ENCODE measurements at regions of chr15 and their contacts with region 1.

Region 1: DNA sequence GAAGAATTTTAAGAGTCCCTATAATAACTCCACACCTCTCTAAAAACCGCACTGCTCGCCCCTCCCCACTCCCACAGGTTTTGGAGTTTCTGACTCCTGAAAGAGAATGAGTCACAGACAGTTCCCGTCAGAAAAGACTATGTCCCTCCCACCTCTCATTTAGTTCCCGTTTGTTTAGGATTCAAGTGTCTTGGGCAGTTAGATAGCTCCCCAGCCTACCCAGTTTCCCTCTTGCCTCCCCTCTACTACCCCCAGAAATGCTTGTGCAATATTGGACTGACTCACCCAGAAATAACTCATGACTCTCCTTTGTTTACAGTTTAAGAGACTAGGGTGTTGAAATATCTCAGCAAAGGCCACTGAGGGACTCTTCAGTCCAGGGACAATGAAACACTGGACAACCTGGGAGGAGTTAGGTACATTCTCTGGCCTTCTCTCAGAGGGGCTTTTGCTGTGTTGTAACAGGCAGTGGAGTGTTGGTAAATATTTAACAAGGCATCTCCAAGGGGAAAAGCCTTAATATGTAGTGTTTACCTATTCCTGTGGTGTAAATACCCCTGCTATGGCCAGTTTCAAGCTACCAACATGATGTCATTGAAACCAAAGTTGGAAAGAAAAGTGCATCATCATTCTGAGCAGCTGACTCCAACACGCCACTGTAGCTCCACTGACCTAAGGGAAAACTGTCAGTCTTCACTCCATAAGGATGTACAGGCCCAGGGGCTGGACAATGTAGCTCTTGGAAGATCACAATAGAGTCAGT is 96.1 kb upstream of the CHD2 start:
- DNase-seq: peak; percentile 100
- ATAC-seq: peak; percentile 88
- H3K4me3 ChIP-seq: no peak overlapping the region
- H3K27ac ChIP-seq: peak overlapping the region; percentile 72; the same call in 1 of the 2 replicates
- H3K4me1 ChIP-seq: peaks cover 18% of the 10 kb centered on the region
- H3K27me3 ChIP-seq: no peaks in the 10 kb centered on the region
- CTCF ChIP-seq: no peak
- POLR2A ChIP-seq: peak; percentile 53; the same call in 1 of the 2 replicates
- RAD21 ChIP-seq: peak; percentile 24

Region 2: DNA sequence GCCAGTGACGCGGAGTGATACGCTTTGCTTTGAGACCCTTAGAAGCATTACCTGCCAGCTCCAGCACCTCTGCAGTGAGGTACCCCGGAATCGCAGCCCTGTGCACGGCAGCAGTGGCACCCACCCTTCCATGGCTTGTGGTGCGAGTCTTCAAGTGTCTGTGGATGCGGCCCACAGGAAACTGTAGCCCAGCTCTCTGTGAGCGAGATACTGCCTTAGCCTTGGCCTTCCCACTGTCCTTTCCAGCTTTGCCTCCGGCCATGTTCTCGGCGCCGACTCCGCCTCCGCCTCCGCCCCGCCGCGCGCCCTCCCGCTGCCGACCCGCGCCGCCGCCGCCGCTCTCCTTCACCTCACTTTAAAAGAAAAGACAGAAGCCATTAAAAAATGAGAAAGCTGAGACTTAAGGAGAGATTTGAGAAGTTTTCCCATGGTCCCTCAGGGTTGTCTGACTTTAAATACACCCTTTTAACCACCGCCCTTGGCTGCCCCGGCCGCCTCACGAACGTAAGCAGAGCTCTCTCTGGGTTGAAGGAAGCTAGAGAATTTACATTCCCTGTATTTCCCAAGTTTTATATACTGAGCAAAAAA is 70.0 kb before region 1 on chr15:
- CTCF ChIA-PET with region 1: no interaction called
- POLR2A ChIA-PET with region 1: no interaction called
- dilution Hi-C with region 1: no loop called
- in situ Hi-C with region 1: no loop called
- intact Hi-C with region 1: no loop called
- DNase-seq: peak; percentile 11
- ATAC-seq: peak; percentile 89
- H3K4me3 ChIP-seq: peak overlapping the region; percentile 45
- H3K27ac ChIP-seq: 0 out of 2 replicates have a peak overlapping the region, but pooled peaks have one; percentile 55
- H3K4me1 ChIP-seq: peaks cover 2% of the 10 kb centered on the region; the same call in 1 of the 2 replicates
- H3K27me3 ChIP-seq: no peaks in the 10 kb centered on the region
- CTCF ChIP-seq: no peak
- POLR2A ChIP-seq: no peak
- RAD21 ChIP-seq: no peak

Region 3: GRCh38 chr15:92881802-92882696 is 78.0 kb after region 1 on chr15:
- CTCF ChIA-PET with region 1: interaction called, 3 read pairs
- POLR2A ChIA-PET with region 1: interaction called, 27 read pairs
- dilution Hi-C with region 1: no loop called
- in situ Hi-C with region 1: no loop called
- intact Hi-C with region 1: loop called (anchors 1 kb)
- DNase-seq: peak; percentile 100
- ATAC-seq: peak; percentile 94
- H3K4me3 ChIP-seq: peak overlapping the region; percentile 99
- H3K27ac ChIP-seq: peak overlapping the region; percentile 82
- H3K4me1 ChIP-seq: peaks cover 7% of the 10 kb centered on the region
- H3K27me3 ChIP-seq: no peaks in the 10 kb centered on the region
- CTCF ChIP-seq: no peak
- POLR2A ChIP-seq: 0 out of 2 replicates have a peak, but pooled peaks have one; percentile 44
- RAD21 ChIP-seq: no peak

Region 4: DNA sequence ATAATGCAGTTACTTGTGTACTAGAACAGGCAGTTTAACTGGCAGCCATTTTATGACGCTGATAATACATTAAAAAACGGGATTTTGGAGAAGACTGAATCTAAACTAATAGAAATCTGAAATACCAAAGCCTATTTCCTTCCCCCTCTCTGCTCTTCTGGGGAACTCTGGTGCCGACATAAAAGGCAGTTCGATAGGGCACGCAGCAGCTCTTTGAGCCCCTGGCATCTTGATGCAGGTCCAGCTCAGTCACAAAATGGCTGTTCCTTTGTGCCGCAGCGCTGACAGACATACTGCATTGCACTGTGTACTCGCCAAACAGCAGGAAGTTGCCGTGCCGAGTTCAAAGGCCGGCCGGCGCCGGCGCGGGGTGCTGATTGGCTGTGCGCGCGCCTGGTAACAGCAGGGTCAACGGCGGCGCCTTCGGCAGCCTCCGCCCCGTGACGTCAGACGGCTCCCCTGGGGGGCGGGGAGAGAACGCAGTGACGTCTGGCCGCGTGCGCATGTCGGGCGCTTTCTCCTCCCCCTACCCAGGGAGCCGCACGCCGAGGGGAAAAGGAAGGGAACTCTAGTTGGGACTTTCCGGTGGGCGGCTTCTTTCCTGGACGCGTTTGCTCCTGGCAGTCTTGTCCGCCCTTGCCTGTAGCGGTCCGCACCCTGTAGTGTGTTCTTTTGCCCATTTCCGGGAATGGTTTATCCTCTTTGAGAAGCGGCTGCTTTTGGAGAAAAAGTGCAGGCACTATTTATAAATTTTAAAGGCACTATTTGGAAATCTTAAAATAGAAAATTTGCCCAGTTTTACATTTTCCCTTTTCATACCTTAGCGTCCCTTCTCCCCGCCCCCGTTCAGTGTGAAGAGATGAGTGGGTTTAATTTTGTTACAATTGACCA is 100.2 kb after region 1 on chr15:
- CTCF ChIA-PET with region 1: interaction called, 7 read pairs
- POLR2A ChIA-PET with region 1: interaction called, 12 read pairs
- dilution Hi-C with region 1: no loop called
- in situ Hi-C with region 1: no loop called
- intact Hi-C with region 1: loop called (anchors 1 kb)
- DNase-seq: peak; percentile 98
- ATAC-seq: peak; percentile 85
- H3K4me3 ChIP-seq: peak overlapping the region; percentile 54
- H3K27ac ChIP-seq: peak overlapping the region; percentile 98
- H3K4me1 ChIP-seq: peaks cover 11% of the 10 kb centered on the region
- H3K27me3 ChIP-seq: no peaks in the 10 kb centered on the region
- CTCF ChIP-seq: no peak
- POLR2A ChIP-seq: peak; percentile 98
- RAD21 ChIP-seq: no peak

Region 5: DNA sequence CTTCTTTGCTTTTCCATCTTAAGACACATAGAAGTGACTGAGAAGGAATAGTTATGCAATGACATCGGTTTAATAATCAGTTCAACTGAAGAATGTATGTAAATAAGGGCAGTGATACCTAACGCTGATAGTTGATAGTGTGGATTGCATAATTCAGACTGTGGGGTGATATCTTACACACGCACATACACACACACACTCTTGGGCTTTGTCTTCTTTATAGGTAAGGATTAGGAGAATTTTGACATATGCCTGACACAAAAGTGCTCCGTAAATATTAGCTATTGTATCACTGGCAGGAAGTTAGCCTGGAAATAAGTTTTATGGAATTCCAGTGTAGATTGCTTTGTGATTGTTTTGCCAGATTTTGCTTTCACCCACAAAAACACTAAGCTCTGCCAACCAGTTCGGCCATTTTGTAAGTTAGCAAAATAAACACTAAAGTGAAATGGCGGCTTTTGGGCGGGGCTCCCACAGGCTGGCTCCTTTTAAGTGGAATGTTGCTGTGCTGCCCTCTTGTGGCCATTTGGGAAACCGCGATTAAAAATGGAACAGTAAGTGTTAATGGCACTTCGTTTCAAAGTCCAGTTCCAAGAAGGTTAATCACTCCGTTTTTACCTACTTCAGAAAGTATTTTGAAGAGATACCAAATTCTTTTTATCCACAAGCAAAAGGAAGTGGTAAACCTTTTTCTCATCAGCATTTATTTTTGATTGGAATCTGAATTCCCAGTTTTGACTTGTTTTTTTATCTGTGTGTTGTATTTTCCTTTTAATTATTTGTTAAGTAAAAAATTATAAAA is 113.8 kb after region 1 on chr15:
- CTCF ChIA-PET with region 1: interaction called, 6 read pairs
- POLR2A ChIA-PET with region 1: interaction called, 7 read pairs
- dilution Hi-C with region 1: no loop called
- in situ Hi-C with region 1: loop called (anchors 5 kb)
- intact Hi-C with region 1: loop called (anchors 1 kb)
- DNase-seq: peak; percentile 93
- ATAC-seq: peak; percentile 61
- H3K4me3 ChIP-seq: no peak overlapping the region
- H3K27ac ChIP-seq: peak overlapping the region; percentile 88; the same call in 1 of the 2 replicates
- H3K4me1 ChIP-seq: peaks cover 31% of the 10 kb centered on the region
- H3K27me3 ChIP-seq: no peaks in the 10 kb centered on the region
- CTCF ChIP-seq: peak; percentile 94
- POLR2A ChIP-seq: peak; percentile 33; the same call in 1 of the 2 replicates
- RAD21 ChIP-seq: peak; percentile 85

Region 6: DNA sequence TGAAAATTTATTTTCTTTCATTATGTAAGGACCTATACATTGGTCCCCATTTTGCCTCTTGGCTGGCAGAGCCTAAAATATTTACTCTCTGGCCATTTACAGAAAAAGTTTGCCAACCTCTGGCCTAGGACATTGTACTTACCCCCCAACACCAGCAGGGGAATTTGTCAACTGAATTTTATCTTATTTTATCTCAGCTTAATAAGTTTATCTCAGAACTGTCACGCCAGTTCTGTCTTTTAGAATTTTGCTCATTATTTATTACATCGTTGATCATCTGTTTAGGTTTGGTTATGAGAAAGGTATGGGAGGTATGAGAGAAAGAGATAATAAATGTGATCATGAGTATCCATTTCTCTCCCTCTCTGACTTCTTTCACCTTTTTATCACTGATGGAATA is 134.4 kb after region 1 on chr15:
- CTCF ChIA-PET with region 1: no interaction called
- POLR2A ChIA-PET with region 1: interaction called, 22 read pairs
- dilution Hi-C with region 1: loop called (anchors 25 kb)
- in situ Hi-C with region 1: no loop called
- intact Hi-C with region 1: no loop called
- DNase-seq: no peak
- ATAC-seq: no peak
- H3K4me3 ChIP-seq: no peak overlapping the region
- H3K27ac ChIP-seq: no peak overlapping the region
- H3K4me1 ChIP-seq: no peaks in the 10 kb centered on the region; the same call in 1 of the 2 replicates
- H3K27me3 ChIP-seq: no peaks in the 10 kb centered on the region
- CTCF ChIP-seq: 0 out of 2 replicates have a peak, but pooled peaks have one; percentile 8
- POLR2A ChIP-seq: no peak
- RAD21 ChIP-seq: no peak

Region 7: DNA sequence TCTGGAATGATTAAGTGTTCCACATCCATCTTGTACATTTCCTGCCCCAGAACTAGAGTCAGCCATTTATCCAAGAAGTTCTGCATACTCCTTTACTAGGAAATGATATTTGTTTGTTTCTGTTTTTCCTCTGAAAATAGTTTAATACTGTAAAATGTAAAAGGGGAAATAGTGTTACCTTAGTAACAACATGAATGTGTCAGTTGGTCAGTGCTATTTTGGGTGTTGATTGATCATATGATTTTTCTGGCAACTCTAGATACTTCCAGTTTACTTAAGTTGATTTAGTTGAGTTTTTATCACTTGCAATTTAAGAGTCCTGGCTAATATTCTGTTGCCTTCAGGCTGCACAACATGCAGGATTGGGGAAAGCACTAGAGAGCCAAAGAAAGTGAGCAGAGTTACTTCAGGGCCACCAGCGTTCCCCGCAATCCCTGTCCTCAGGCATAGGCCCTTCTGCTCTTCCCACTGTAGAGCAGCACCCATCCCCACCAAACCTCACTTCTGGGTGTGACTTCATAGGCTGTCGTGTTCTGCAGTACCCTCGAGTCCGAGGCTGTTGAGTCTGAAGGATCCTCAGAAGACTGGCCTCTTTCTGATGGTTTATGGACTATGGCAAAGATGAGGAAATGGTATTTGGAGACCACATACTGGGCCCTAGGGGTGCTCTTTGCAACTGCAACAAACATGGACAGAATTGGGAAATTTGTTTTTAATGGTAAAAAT is 165.1 kb after region 1 on chr15:
- CTCF ChIA-PET with region 1: no interaction called
- POLR2A ChIA-PET with region 1: interaction called, 16 read pairs
- dilution Hi-C with region 1: no loop called
- in situ Hi-C with region 1: no loop called
- intact Hi-C with region 1: loop called (anchors 5 kb)
- DNase-seq: no peak
- ATAC-seq: no peak
- H3K4me3 ChIP-seq: no peak overlapping the region
- H3K27ac ChIP-seq: no peak overlapping the region
- H3K4me1 ChIP-seq: peaks cover 3% of the 10 kb centered on the region; the same call in 1 of the 2 replicates
- H3K27me3 ChIP-seq: no peaks in the 10 kb centered on the region
- CTCF ChIP-seq: no peak
- POLR2A ChIP-seq: no peak
- RAD21 ChIP-seq: no peak

Measured in IMR-90 (cell line).